ENCODE measurements at regions of chr22 and their contacts with region 1.

Region 1: DNA sequence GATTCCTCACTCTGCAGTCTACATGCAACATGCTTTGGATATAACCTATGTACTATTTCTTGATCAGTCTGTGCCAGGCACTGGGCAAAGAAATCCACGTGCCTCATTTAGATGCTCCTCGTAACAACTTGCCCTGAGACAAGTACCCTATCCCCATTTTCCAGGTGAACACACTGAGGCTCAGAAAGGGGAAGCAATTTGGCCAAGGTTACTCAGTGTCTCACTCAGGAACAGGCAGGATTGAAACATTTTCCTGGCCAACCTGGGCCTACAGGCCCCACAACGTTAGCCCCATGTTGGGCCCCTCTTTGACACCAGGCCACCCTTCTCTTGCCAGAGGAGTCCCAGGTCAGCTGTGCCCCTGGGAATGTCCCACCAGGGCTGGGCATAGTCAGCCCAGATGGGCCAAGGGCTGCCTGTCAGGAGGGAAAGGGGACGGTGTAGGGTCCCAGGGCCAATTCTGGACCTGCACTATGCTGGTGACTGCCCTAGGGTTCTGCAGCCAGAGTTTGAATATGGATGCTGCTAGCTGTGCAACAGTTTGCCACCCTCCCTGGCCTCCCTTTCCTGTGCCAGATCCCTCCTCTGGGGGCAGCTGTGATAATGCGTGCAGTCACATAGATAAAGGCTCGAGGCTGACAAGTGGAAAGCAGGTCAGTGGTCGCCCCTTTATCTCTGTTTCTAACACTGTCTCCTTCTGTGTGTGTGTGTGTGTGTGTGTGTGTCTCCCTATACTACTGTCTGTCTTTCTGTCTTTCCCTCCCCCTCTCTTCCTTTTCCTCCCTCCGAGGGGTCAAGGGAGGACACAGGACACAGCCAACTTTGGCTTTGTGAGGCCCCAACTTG is 10.4 kb upstream of the EMID1 start:
- DNase-seq: no peak
- ATAC-seq: no peak; the same call in 1 of the 2 replicates
- H3K4me3 Mint-ChIP-seq: no peak overlapping the region
- H3K27ac Mint-ChIP-seq: no peak overlapping the region
- H3K4me1 Mint-ChIP-seq: no peaks in the 10 kb centered on the region
- H3K27me3 Mint-ChIP-seq: no peaks in the 10 kb centered on the region
- CTCF ChIP-seq: no peak

Region 2: GRCh38 chr22:28570691-28571373 is 624.5 kb before region 1 on chr22:
- CTCF ChIA-PET with region 1: no interaction called
- POLR2A ChIA-PET with region 1: no interaction called
- DNase-seq: no peak
- ATAC-seq: no peak
- H3K4me3 Mint-ChIP-seq: no peak overlapping the region
- H3K27ac Mint-ChIP-seq: no peak overlapping the region
- H3K4me1 Mint-ChIP-seq: peaks cover 4% of the 10 kb centered on the region; the same call in 1 of the 2 replicates
- H3K27me3 Mint-ChIP-seq: no peaks in the 10 kb centered on the region
- CTCF ChIP-seq: no peak

Region 3: DNA sequence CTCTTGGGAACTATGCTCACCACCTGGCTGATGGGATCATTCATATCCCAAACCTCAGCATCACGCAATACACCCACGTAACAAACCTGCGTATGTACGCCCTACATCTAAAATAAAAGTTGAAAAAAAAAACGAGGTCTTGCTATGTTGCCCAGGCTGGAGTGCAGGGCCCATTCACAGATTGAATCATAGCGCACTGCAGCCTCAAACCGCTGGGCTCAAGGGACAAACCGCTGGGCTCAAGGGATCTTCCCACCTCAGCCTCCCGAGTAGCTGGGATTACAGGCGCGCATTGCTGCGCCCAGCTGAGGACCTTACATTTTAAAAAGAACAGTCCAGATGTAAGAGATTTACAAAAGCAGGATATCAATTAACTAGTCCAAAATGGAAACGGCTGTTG is 31.5 kb before region 1 on chr22:
- CTCF ChIA-PET with region 1: no interaction called
- POLR2A ChIA-PET with region 1: no interaction called
- DNase-seq: no peak
- ATAC-seq: no peak
- H3K4me3 Mint-ChIP-seq: no peak overlapping the region
- H3K27ac Mint-ChIP-seq: no peak overlapping the region
- H3K4me1 Mint-ChIP-seq: no peaks in the 10 kb centered on the region
- H3K27me3 Mint-ChIP-seq: no peaks in the 10 kb centered on the region; the same call in 1 of the 2 replicates
- CTCF ChIP-seq: no peak

Region 4: DNA sequence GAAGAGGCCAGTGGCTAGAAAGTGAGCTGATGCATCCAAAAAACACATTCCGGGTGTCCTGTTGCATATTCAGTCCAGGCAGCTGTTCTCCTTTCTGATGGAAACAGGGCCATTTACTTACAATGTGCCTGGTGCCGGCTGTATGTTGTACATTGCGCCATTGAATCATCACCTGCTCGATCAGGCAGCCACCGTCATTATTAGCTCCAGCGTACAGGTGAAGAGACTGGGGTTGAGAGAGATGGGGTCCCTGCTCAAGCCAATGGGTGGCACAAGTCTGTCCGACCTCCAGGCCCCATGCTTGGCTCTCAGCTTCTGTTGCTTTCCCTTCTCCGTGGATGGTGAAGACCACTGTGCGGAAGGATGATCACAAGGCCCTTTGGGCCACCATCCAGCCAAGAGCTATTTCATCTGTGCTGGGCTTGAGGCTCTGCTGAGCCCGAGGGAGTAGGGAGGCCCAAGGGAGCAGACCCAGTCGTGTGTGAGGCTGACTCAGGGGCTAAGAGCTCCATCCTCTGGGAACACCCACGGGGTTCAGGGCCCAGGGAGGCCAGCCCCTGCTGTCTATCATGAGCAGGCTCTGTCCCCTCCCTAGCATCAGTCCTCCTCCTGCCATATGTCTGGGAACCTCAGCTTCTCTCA is 10.4 kb before region 1 on chr22:
- CTCF ChIA-PET with region 1: interaction called, 11 read pairs
- POLR2A ChIA-PET with region 1: no interaction called
- DNase-seq: no peak
- ATAC-seq: no peak
- H3K4me3 Mint-ChIP-seq: no peak overlapping the region
- H3K27ac Mint-ChIP-seq: no peak overlapping the region; the same call in 1 of the 2 replicates
- H3K4me1 Mint-ChIP-seq: peaks cover 10% of the 10 kb centered on the region
- H3K27me3 Mint-ChIP-seq: no peaks in the 10 kb centered on the region
- CTCF ChIP-seq: no peak